PC-3 (cell line): ENCODE measurements at regions of chr7 and their contacts with region 1.

Region 1: DNA sequence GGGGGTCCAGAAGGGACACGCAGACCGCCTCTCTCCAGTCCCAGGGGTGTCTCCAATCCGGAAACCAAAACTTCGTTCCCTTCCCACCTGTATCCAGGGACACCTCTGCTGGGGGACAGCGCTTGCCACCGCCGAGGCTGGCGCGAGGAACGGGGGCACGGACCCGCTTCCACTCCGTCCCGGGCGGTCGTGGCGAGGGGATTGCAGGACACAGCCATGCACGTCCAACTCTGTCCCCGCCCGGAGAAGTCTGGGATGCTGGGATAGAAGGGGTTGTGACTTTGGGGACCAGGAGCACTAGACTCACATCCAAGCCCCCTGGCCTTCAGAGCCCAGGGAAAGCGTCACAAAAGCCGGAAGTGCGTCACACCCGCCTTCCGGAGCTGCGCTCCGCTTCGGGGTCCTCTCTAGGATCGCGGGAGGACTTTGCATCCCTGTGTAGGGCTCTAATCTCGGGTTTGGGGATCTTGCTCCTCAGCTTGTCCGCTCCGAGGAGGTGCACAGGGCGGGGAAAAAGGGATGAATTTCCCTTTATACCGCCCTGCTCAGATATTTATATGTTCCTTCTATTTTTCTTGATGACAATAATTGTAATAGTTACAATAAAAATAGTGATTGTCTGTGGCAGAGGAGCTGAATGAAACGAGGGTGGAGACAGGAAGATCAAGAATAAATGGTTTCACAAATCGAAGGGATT is at the start of gene FAM200A:
- DNase-seq: peak; percentile 90
- ATAC-seq: peak; percentile 99
- H3K4me3 ChIP-seq: peak within 1 kb of the TSS; percentile 92
- H3K27ac ChIP-seq: 0 out of 2 replicates have a peak within 1 kb of the TSS, but pooled peaks have one; percentile 11
- H3K4me1 ChIP-seq: no peaks in the 10 kb centered on the region
- H3K27me3 ChIP-seq: no peaks in the 10 kb centered on the region
- CTCF ChIP-seq: no peak
- total RNA-seq, gene FAM200A: 2.2 and 3.8 TPM in 2 replicates

Region 2: DNA sequence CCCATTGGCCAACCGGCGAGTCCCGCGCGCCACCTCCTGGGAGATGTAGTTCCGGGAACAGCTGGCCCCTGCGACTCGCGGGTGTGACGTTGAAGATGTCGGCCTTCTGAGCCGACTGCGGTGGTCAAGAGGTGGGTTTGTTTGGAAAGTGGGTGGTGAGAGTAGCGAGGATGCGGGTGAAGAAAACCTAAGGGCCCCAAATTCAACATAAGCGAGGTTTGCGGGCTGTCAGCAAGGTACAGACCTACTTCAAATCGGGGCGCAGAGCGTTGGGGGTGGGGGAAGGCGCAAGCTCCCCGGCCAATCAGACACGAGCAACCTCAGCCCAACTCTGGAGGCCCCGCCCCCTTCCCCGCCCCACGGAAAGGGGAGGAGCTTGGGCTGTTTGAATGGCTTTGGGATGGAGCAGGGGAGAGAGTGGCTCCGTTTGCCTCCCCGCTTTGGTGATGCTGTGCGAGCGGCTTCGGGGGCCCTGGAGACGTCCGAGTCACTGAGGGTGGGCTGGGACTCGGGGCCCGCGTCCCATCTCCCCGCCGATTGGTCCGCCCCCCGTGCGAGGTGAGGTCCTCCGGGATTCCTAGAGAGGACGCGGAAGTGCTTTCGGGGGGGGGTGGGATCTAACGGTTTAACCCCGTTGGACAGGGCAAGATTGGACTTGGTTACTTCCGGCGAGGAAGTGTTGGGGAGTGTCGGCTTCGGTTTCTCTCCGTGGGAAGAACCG is 47.2 kb before region 1 on chr7 and contains the start of gene ZKSCAN5:
- CTCF ChIA-PET with region 1: no interaction called
- POLR2A ChIA-PET with region 1: no interaction called
- intact Hi-C with region 1: loop called (anchors 2 kb)
- DNase-seq: peak; percentile 85
- ATAC-seq: peak; percentile 81
- H3K4me3 ChIP-seq: peak within 1 kb of the TSS; percentile 84
- H3K27ac ChIP-seq: peak within 1 kb of the TSS; percentile 39
- H3K4me1 ChIP-seq: 0 out of 2 replicates have a peak, but pooled peaks cover 5% of the 10 kb centered on the region
- H3K27me3 ChIP-seq: no peaks in the 10 kb centered on the region
- CTCF ChIP-seq: no peak
- total RNA-seq, gene ZKSCAN5: 8.6 and 9.9 TPM in 2 replicates

Region 3: GRCh38 chr7:99562832-99563231 is 10.9 kb after region 1 on chr7:
- CTCF ChIA-PET with region 1: no interaction called
- POLR2A ChIA-PET with region 1: no interaction called
- intact Hi-C with region 1: loop called (anchors 1 kb)
- DNase-seq: peak; percentile 97
- ATAC-seq: peak; percentile 97
- H3K4me3 ChIP-seq: peak overlapping the region; percentile 42
- H3K27ac ChIP-seq: peak overlapping the region; percentile 88
- H3K4me1 ChIP-seq: peaks cover 27% of the 10 kb centered on the region
- H3K27me3 ChIP-seq: no peaks in the 10 kb centered on the region
- CTCF ChIP-seq: no peak

Region 4: DNA sequence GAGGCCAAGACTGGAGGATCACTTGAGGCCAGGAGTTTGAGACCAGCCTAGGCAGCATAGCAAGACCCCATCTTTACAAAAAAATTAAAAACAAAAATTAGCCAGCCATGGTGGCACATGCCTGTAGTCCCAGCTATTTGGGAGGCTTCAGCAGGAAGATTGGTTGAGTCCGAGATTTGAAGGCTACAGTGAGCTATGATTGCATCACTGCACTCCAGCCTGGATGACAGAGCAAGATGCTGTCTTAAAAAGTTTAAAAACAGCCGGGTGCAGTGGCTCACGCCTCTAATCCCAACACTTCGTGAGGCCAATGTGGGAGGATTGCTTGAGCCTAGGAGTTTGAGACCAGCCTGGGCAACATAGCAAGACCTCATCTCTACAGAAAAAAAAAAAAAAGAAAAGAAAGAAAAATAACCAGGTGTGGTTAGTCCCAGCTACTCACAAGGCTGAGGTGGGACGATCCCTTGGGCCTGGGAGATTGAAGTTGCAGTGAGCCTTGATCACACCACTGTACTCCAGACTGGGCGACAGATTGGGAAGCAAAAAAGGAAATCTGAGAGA is 1226.2 kb after region 1 on chr7:
- CTCF ChIA-PET with region 1: no interaction called
- POLR2A ChIA-PET with region 1: interaction called, 19 read pairs
- intact Hi-C with region 1: no loop called
- DNase-seq: no peak
- ATAC-seq: no peak
- H3K4me3 ChIP-seq: no peak overlapping the region
- H3K27ac ChIP-seq: no peak overlapping the region
- H3K4me1 ChIP-seq: no peaks in the 10 kb centered on the region
- H3K27me3 ChIP-seq: no peaks in the 10 kb centered on the region
- CTCF ChIP-seq: no peak